ENCODE measurements at regions of chr6 and their contacts with region 1.

Region 1: DNA sequence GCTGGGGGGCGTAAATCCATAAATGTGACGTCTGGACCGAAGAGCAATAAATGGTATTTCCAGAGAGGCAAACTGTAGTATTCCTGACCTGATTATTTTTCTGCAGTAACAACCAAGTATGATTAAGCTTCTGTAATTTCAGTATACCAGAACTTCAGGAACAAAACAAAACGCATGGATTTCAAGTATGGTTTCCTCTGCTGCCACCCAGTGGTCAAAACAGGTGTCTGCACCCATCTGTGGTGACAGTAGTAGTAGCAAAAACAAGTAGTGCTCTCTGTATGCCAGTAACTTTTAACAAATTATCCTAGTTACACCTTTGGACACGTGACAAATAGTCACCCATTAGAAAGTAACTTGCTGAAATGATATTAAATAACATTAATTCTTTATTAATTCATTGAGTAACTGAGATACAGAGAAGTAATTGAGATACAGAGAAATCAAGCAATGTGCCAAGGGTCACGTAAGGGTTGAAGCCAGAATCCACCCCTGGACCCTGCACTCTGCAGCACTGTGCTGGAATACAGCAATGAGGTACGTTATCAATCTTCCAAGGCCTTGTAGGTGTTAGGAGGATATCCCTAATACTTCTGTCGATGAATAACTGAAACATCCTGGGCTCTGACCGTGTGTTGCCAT is 7.9 kb downstream of the CALHM4 start:
- DNase-seq: no peak
- H3K4me3 ChIP-seq: no peak overlapping the region
- CTCF ChIP-seq: peak; percentile 70

Region 2: GRCh38 chr6:116253505-116254296 is 307.8 kb before region 1 on chr6 and contains the start of gene TSPYL4:
- CTCF ChIA-PET with region 1: interaction called, 16 read pairs
- POLR2A ChIA-PET with region 1: interaction called, 3 read pairs
- DNase-seq: no peak
- H3K4me3 ChIP-seq: peak within 1 kb of the TSS; percentile 98
- CTCF ChIP-seq: no peak

Region 3: DNA sequence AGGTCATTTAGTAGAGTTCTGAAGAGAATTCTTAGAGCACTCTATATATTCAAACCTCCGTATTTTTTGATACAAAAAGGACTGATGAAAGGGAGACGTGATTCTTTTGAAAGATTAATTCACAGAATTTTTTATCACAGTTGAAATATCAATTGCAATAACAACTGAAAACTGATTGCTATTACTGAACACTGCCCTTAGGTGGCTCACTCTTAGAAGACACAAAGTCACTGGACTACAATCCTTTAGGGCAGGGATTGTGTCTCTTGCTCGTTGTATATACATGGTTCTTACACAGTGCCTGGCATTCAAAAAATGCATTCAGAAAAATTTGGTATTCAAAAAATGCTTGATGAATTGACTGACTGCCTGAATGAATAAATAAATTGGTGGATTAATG is 117.4 kb before region 1 on chr6:
- CTCF ChIA-PET with region 1: interaction called, 17 read pairs
- POLR2A ChIA-PET with region 1: no interaction called
- DNase-seq: no peak
- H3K4me3 ChIP-seq: no peak overlapping the region
- CTCF ChIP-seq: peak; percentile 56

Region 4: DNA sequence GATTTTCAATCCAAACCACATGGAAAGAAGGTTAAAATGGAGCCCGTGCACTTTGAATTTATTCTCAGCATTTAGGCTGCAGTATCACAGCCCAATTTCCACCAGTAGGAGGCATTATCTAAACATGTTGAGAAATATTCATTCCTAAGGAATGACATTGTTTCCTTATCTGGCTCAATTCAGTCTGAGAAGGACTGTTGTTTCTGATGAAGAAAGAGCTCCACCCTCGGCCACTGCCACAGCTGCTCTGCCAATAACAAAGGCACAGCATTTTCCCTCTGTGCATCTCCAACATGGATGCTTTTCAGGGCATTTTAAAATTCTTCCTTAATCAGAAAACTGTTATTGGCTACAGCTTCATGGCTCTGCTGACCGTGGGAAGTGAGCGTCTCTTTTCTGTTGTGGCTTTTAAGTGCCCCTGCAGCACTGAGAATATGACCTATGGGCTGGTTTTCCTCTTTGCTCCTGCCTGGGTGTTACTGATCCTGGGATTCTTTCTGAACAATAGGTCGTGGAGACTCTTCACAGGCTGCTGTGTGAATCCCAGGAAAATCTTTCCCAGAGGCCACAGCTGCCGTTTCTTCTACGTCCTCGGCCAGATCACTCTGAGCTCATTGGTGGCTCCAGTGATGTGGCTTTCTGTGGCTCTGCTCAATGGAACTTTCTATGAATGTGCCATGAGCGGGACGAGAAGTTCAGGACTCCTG is 49.9 kb before region 1 on chr6 and contains the start of gene CALHM5:
- CTCF ChIA-PET with region 1: interaction called, 61 read pairs
- POLR2A ChIA-PET with region 1: no interaction called
- DNase-seq: peak; percentile 46
- H3K4me3 ChIP-seq: peak within 1 kb of the TSS; percentile 59
- CTCF ChIP-seq: peak; percentile 53

Region 5: GRCh38 chr6:116518621-116519368 is 42.7 kb before region 1 on chr6:
- CTCF ChIA-PET with region 1: interaction called, 61 read pairs
- POLR2A ChIA-PET with region 1: no interaction called
- DNase-seq: no peak
- H3K4me3 ChIP-seq: no peak overlapping the region
- CTCF ChIP-seq: no peak

Region 6: DNA sequence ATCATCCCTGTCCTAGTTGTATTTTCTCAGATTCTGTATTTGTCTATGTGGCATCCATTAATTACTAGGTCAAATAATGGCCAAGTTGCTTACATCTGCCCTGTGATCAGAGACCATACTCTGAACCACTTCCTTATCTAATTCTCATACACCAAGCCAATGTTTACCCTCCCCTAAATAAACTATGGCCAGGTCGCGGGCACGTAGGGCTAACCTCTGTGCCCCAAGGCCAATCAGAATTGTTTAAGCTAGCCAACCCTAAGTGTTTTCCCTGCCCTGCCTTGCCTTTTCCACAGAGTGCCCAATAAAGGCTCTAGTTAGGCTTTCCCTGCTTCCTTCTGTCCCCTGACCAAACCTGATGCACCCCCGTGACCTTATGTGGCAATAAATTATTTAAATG is 10.7 kb before region 1 on chr6:
- CTCF ChIA-PET with region 1: interaction called, 119 read pairs
- POLR2A ChIA-PET with region 1: no interaction called
- DNase-seq: no peak
- H3K4me3 ChIP-seq: no peak overlapping the region
- CTCF ChIP-seq: no peak